ENCODE measurements at regions of chr5 and their contacts with region 1.

Region 1: GRCh38 chr5:65047948-65048690 is 279.4 kb downstream of the CWC27 start:
- DNase-seq: no peak
- H3K4me3 ChIP-seq: no peak overlapping the region
- H3K27ac ChIP-seq: no peak overlapping the region
- H3K4me1 ChIP-seq: no peaks in the 10 kb centered on the region
- H3K27me3 ChIP-seq: no peaks in the 10 kb centered on the region
- CTCF ChIP-seq: no peak
- EP300 ChIP-seq: no peak
- POLR2A ChIP-seq: no peak
- RAD21 ChIP-seq: no peak

Region 2: GRCh38 chr5:65035211-65036206 is 12.6 kb before region 1 on chr5:
- CTCF ChIA-PET with region 1: interaction called, 27 read pairs
- POLR2A ChIA-PET with region 1: interaction called, 4 read pairs
- DNase-seq: peak; percentile 81 to 93
- H3K4me3 ChIP-seq: peak overlapping the region; percentile 57 to 67 (median 63)
- H3K27ac ChIP-seq: peak overlapping the region; percentile 90
- H3K4me1 ChIP-seq: peaks cover 2 to 10% (median 4%) of the 10 kb centered on the region in 4 experiments
- H3K27me3 ChIP-seq: peaks cover 0 to 3% (median 0%) of the 10 kb centered on the region in 4 experiments; a peak in 2 of 7 replicates
- CTCF ChIP-seq: no peak
- EP300 ChIP-seq: 0 out of 3 replicates have a peak, but pooled peaks of 1 of the 2 experiments have one; percentile 45
- POLR2A ChIP-seq: peak; percentile 73 to 77
- RAD21 ChIP-seq: 0 out of 4 replicates have a peak, but pooled peaks of 1 of the 2 experiments have one; percentile 7

Measured in H1 (cell line).